Activated T-helper 2 cell treated with anti-CD3 and anti-CD28 coated beads, Interferon-gamma antibody, Interleukin-2, Interleukin-4, amounts not matched to agents 10 μg/mL and 5 μg/mL and 100 μg/mL, durations not matched to agents 14 hours and 24 hours and 36 hours (primary cell): ENCODE measurements at regions of chr16 and their contacts with region 1.

Region 1: DNA sequence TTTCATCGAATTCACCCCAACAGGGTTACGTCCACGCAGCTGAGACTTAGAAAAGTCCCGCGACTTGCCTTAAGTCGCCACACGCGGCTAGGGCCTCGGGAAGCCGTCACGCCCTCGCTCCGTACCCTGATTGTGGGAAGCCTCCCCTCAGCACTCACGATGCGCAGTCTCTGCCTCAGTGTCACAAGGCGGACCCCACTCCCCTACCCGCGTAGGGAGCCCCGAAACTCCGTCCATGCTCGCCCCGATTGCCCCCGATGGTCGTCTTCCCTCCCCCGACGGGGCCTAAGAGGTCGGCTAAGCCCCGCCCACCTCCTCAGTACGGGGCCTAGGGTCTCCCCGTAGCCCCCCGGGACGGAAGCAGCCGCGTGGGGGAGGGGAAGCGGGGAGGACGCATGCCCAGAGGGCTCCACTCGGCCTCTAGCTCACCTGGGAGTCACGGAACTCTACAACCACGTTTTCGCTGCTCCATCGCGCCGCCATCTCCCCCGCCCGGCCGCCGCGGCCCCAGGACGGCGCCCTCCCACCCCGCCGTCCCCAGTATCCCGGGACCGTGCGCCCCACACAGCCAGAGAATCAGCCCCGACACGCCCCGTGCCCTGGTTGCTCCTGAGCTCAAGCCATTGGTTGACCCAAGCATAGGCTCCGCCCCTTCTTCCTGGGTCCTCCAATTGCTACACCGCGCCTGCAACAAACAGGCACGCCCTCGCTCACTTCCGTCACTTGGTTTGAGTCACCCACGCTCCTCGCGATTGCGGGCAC is at the start of gene WDR59:
- DNase-seq: peak; percentile 99
- H3K4me3 Mint-ChIP-seq: peak within 1 kb of the TSS; percentile 91
- H3K27ac Mint-ChIP-seq: peak within 1 kb of the TSS; percentile 92
- H3K4me1 Mint-ChIP-seq: peaks cover 7% of the 10 kb centered on the region
- H3K27me3 Mint-ChIP-seq: no peaks in the 10 kb centered on the region
- total RNA-seq, gene WDR59: 83.9 and 92.0 TPM in 2 replicates

Region 2: DNA sequence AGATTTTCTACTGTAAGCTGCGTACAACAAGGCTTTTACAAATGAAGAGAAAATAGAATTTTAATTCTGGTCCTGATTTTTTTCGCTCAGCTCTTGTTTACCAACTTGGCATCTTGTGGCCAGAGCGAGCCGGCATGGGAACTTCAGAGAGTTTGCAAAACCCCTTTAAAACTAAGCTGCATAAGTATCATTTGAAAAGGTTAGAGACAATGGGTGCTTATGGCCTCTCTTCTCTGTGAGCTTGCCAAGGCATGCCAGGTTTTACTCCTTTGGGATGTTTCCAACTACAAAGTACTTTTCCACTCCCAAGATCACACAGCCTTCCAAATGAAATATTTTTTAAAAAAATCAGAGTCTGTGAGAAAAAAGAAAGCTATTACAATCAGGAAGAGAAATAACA is 147.7 kb before region 1 on chr16:
- intact Hi-C with region 1: no loop called
- DNase-seq: no peak
- H3K4me3 Mint-ChIP-seq: no peak overlapping the region
- H3K27ac Mint-ChIP-seq: no peak overlapping the region
- H3K4me1 Mint-ChIP-seq: no peaks in the 10 kb centered on the region
- H3K27me3 Mint-ChIP-seq: no peaks in the 10 kb centered on the region

Region 3: DNA sequence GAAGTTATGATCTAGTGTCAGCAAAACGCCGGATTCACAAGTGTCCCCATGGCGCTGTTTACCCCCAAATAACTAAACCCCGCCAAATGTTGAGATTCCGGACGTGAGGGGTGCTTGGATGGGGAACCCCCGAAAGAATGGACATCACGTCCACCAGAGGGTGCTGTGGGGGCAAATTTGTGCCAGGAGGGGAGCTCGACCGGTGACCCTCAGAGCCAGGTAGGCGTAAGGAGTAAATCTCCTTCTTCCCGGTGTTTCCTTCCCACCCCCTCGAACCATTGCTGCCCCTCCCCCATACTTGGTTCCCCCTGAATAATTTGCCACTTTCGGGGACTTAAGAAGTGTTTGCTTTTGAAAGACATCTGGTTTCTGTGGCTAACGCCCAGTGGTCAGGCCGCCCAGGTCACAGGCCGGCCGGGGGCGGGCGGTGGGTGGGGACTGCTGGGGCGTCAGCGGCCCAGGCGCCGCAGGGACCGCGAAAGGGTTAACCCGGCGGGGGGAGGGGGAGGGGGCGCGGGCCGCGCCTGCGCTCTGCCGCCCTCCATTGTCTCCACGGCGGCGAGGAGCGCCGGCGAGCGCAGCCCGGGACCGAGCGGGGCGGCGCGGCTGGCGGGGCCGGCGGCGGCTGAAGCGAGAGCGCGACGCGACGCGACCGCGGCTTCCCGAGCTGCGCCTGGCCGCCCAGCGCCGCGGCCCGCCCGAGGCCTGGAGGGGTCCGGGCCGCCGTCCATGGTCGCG is 13.9 kb after region 1 on chr16 and contains the start of gene ZNRF1:
- intact Hi-C with region 1: loop called (anchors 1 kb)
- DNase-seq: peak; percentile 67
- H3K4me3 Mint-ChIP-seq: peak within 1 kb of the TSS; percentile 86
- H3K27ac Mint-ChIP-seq: peak within 1 kb of the TSS; percentile 80
- H3K4me1 Mint-ChIP-seq: peaks cover 39% of the 10 kb centered on the region
- H3K27me3 Mint-ChIP-seq: peaks cover 16% of the 10 kb centered on the region
- total RNA-seq, gene ZNRF1: 34.8 and 36.6 TPM in 2 replicates

Region 4: DNA sequence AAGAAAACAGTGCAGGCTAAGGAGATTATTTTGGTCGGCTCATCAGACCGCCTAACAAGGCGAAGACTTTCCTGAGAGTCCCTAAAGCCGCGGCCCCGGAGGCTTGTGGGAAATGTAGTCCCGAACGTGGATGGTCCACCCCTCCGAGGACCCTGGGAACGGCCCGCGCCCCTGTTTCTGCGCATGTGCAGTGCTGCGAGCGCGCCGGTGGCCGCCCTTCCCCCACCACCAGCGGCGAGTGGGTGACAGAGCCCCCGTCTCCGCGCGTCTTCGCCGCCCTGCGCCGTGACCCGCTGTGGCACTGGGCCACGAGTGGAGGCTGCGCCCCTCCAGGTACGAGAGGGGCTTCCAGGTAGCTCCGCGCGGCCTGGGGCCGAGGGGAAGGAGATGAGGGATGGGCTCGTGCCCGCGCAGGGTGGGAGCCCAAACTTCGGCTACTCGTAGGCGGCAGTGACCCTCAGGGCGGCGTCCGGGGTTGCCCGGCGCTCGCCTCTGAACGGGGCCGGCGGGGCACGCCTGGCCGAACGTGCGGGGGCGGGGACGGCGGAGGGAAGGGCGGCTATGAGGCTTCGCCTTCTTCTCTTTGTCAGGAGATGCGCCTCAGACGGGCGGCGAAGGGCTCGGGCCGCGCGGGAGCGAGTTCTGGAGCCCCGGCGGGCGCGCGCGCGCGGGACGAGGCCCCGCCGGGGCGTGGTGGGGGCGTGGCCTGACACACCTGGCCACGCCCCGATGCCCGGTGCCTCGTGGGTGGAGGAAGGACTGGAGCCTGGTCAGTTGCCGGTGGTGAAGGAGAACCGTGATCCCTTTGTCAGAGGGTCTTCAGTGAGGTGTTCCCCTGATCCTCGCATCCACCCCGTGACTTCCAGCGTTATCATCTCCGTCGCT is 163.8 kb after region 1 on chr16 and contains the start of gene ZFP1:
- intact Hi-C with region 1: loop called (anchors 1 kb)
- DNase-seq: peak; percentile 90
- H3K4me3 Mint-ChIP-seq: peak within 1 kb of the TSS; percentile 87
- H3K27ac Mint-ChIP-seq: peak within 1 kb of the TSS; percentile 77
- H3K4me1 Mint-ChIP-seq: peaks cover 14% of the 10 kb centered on the region
- H3K27me3 Mint-ChIP-seq: no peaks in the 10 kb centered on the region
- total RNA-seq, gene ZFP1: 11.2 and 14.0 TPM in 2 replicates